CD8-positive, alpha-beta T cell (primary cell): ENCODE measurements at regions of chr1 and their contacts with region 1.

Region 1: GRCh38 chr1:26417111-26417759 is 6.6 kb downstream of the LIN28A start:
- DNase-seq: peak; percentile 70 to 92 (median 85)
- ATAC-seq: peak; percentile 100
- H3K4me3 ChIP-seq: no peak overlapping the region
- H3K4me3 Mint-ChIP-seq: no peak overlapping the region
- H3K27ac ChIP-seq: no peak overlapping the region
- H3K27ac Mint-ChIP-seq: no peak overlapping the region
- H3K4me1 ChIP-seq: no peaks in the 10 kb centered on the region
- H3K4me1 Mint-ChIP-seq: no peaks in the 10 kb centered on the region
- H3K27me3 ChIP-seq: peaks cover 4 to 8% of the 10 kb centered on the region in 2 experiments
- H3K27me3 Mint-ChIP-seq: peaks cover 17% of the 10 kb centered on the region
- CTCF ChIP-seq: peak; percentile 79

Region 2: DNA sequence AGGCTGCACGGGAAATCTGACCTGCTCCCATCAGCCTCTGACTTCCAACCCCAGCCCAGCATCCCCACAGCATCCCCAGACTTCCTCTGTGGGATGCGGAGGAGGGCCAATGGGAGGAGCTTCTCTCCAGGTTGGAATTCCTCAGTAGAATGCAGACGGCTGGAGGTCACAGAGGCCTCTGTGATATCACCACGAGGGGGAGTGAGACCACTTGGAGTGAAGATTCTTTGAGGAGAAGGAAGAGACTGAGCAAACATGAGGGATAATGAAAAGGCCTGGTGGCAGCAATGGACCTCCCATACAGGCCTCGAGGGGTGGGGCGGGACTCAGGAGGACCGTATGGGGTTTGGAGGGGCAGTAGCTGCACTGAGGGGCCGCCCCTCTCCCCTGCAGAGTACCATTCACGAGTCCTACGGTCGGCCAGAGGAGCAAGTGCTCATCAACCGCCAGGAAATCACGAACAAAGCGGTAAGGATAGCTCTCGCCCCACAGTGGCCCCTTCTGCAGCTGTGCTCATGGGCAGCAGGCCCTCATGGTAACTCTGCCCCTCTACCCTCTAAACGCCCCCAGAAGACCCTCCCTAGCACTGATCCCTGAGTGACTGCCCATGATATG is 226.8 kb before region 1 on chr1 and contains the start of gene CATSPER4:
- CTCF ChIA-PET with region 1: interaction called, 10 read pairs
- POLR2A ChIA-PET with region 1: no interaction called
- intact Hi-C with region 1: no loop called
- DNase-seq: peak in 1 of 9 experiments; percentile 42
- ATAC-seq: no peak
- H3K4me3 ChIP-seq: no peak within 1 kb of the TSS
- H3K4me3 Mint-ChIP-seq: no peak within 1 kb of the TSS
- H3K27ac ChIP-seq: no peak within 1 kb of the TSS
- H3K27ac Mint-ChIP-seq: no peak within 1 kb of the TSS
- H3K4me1 ChIP-seq: no peaks in the 10 kb centered on the region
- H3K4me1 Mint-ChIP-seq: peaks cover 5% of the 10 kb centered on the region
- H3K27me3 ChIP-seq: no peaks in the 10 kb centered on the region
- H3K27me3 Mint-ChIP-seq: no peaks in the 10 kb centered on the region
- CTCF ChIP-seq: no peak
- total RNA-seq, gene CATSPER4: not detected

Region 3: GRCh38 chr1:26284597-26285360 is 132.5 kb before region 1 on chr1:
- CTCF ChIA-PET with region 1: interaction called, 28 read pairs
- POLR2A ChIA-PET with region 1: no interaction called
- intact Hi-C with region 1: no loop called
- DNase-seq: peak; percentile 82 to 98 (median 94)
- ATAC-seq: peak; percentile 72
- H3K4me3 ChIP-seq: peak overlapping the region; percentile 27 to 28
- H3K4me3 Mint-ChIP-seq: peak overlapping the region; percentile 82
- H3K27ac ChIP-seq: peak overlapping the region; percentile 61 to 76
- H3K27ac Mint-ChIP-seq: peak overlapping the region; percentile 100
- H3K4me1 ChIP-seq: peaks cover 93% of the 10 kb centered on the region
- H3K4me1 Mint-ChIP-seq: peaks cover 92% of the 10 kb centered on the region
- H3K27me3 ChIP-seq: no peaks in the 10 kb centered on the region
- H3K27me3 Mint-ChIP-seq: no peaks in the 10 kb centered on the region
- CTCF ChIP-seq: peak; percentile 46

Region 4: DNA sequence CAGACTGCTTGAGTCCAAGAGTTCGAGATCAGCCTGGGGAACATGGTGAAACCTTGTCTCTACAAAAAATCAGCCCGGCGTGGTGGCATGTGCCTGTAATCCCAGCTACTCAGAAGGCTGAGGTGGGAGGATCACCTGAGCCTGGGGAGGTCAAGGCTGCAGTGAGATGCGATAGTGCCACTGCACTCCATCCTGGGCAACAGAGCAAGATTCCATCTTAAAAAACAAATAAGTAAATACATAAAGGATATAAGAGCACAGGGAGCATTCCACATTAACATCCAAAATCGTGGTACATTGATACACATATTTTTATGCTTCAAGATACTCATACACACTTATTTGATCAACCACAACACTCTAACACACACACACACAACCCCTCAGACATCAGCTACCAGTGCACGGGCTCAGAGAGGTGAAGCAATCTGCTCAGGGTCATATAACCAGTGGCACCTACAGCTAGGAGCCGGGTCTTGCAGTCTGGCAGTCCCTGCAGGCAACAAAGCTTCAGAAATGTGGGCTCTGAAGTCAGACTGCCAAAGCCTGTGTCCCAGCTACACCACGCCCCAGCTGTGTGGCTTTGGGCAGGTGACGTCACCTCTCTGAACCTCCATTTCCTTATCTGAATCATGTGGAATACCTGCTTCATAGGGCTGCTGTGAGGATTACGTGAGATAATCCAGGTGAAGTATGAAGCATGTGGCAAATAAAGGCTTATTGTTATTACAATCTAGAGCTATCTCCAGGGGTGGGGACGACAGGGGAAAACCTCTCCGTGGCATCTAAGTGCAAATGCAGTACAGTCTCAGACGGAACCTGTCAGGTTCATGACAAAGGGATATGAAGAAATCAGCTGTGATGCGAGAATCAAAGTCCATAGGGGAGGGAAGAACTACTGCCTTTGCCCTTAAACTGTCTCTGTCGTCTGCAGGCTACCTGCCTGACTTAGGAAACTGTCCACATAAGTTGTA is 58.5 kb before region 1 on chr1:
- CTCF ChIA-PET with region 1: interaction called, 70 read pairs
- POLR2A ChIA-PET with region 1: no interaction called
- intact Hi-C with region 1: loop called in 1 of 2 experiments (anchors 1 kb)
- DNase-seq: peak; percentile 52 to 90 (median 72)
- ATAC-seq: peak; percentile 81
- H3K4me3 ChIP-seq: no peak overlapping the region
- H3K4me3 Mint-ChIP-seq: peak overlapping the region; percentile 42
- H3K27ac ChIP-seq: no peak overlapping the region
- H3K27ac Mint-ChIP-seq: peak overlapping the region; percentile 84
- H3K4me1 ChIP-seq: peaks cover 36% of the 10 kb centered on the region
- H3K4me1 Mint-ChIP-seq: peaks cover 40% of the 10 kb centered on the region
- H3K27me3 ChIP-seq: peaks cover 0 to 18% of the 10 kb centered on the region in 2 experiments
- H3K27me3 Mint-ChIP-seq: peaks cover 13% of the 10 kb centered on the region
- CTCF ChIP-seq: no peak

Region 5: GRCh38 chr1:26378088-26378878 is 39.0 kb before region 1 on chr1:
- CTCF ChIA-PET with region 1: interaction called, 23 read pairs
- POLR2A ChIA-PET with region 1: interaction called, 3 read pairs
- intact Hi-C with region 1: no loop called
- DNase-seq: peak; percentile 63 to 96 (median 85)
- ATAC-seq: peak; percentile 91
- H3K4me3 ChIP-seq: peak overlapping the region; percentile 7 to 19
- H3K4me3 Mint-ChIP-seq: peak overlapping the region; percentile 59
- H3K27ac ChIP-seq: peak overlapping the region; percentile 54 to 76
- H3K27ac Mint-ChIP-seq: peak overlapping the region; percentile 91
- H3K4me1 ChIP-seq: peaks cover 65% of the 10 kb centered on the region
- H3K4me1 Mint-ChIP-seq: peaks cover 68% of the 10 kb centered on the region
- H3K27me3 ChIP-seq: no peaks in the 10 kb centered on the region
- H3K27me3 Mint-ChIP-seq: no peaks in the 10 kb centered on the region
- CTCF ChIP-seq: no peak

Region 6: GRCh38 chr1:26431979-26432695 is 14.9 kb after region 1 on chr1 and contains the start of gene DHDDS:
- CTCF ChIA-PET with region 1: interaction called, 23 read pairs
- POLR2A ChIA-PET with region 1: interaction called, 3 read pairs
- intact Hi-C with region 1: no loop called
- DNase-seq: peak; percentile 96 to 99 (median 99)
- ATAC-seq: peak; percentile 96
- H3K4me3 ChIP-seq: peak within 1 kb of the TSS; percentile 72 to 78
- H3K4me3 Mint-ChIP-seq: peak within 1 kb of the TSS; percentile 95
- H3K27ac ChIP-seq: peak within 1 kb of the TSS; percentile 73 to 81
- H3K27ac Mint-ChIP-seq: peak within 1 kb of the TSS; percentile 96
- H3K4me1 ChIP-seq: peaks cover 20% of the 10 kb centered on the region
- H3K4me1 Mint-ChIP-seq: peaks cover 21% of the 10 kb centered on the region
- H3K27me3 ChIP-seq: no peaks in the 10 kb centered on the region
- H3K27me3 Mint-ChIP-seq: no peaks in the 10 kb centered on the region
- CTCF ChIP-seq: no peak
- total RNA-seq, gene DHDDS: 23.9 to 29.2 TPM

Region 7: GRCh38 chr1:27428316-27429028 is 1011.2 kb after region 1 on chr1:
- CTCF ChIA-PET with region 1: no interaction called
- POLR2A ChIA-PET with region 1: no interaction called
- intact Hi-C with region 1: no loop called
- DNase-seq: no peak
- ATAC-seq: peak; percentile 15
- H3K4me3 ChIP-seq: peak overlapping the region; percentile 2 to 16
- H3K4me3 Mint-ChIP-seq: peak overlapping the region; percentile 76
- H3K27ac ChIP-seq: peak overlapping the region; percentile 19 to 28
- H3K27ac Mint-ChIP-seq: peak overlapping the region; percentile 88
- H3K4me1 ChIP-seq: peaks cover 75% of the 10 kb centered on the region
- H3K4me1 Mint-ChIP-seq: peaks cover 78% of the 10 kb centered on the region
- H3K27me3 ChIP-seq: no peaks in the 10 kb centered on the region
- H3K27me3 Mint-ChIP-seq: no peaks in the 10 kb centered on the region
- CTCF ChIP-seq: no peak